ENCODE measurements at regions of chr18 and their contacts with region 1.

Region 1: DNA sequence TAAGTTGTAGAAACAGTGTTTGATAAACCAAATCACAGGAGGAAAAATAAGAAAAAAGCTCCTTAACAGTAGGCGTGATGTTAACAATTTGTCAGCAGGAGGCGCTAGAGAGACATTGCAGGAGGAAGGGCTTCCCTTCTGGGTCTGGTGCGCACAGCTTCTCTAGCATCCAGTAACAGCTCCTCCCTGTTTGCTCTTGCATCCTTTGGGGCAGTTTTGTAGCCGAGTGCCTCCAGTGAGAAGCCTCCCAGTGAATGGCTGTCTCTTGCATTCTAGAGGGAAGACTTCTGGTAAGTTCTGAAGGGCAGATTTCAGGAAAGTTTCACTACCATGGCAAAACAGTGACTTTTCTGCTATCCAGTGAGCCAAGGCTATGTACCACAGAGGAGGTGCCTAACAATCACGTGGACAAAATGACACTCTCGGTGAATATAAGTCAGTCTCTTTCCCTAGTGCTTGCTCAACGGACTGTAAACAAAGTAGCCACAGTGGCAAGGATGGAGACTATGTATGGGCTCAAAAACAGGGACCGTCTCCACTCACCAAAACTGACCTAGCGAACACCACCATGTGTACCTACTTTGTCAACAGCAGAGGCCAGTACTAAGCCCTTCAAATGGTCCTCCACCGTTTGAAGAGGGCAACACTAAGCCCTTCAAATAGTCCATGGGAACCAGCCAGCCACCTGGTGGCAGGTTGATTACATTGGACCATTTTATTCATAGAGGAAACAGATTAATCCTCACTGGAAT is 9.6 kb upstream of the ZNF396 start:
- DNase-seq: peak; percentile 72
- H3K4me3 Mint-ChIP-seq: peak overlapping the region; percentile 7
- H3K27ac Mint-ChIP-seq: no peak overlapping the region
- H3K4me1 Mint-ChIP-seq: no peaks in the 10 kb centered on the region
- H3K27me3 Mint-ChIP-seq: peaks cover 9% of the 10 kb centered on the region
- CTCF ChIP-seq: peak; percentile 85

Region 2: GRCh38 chr18:35227254-35227653 is 159.5 kb before region 1 on chr18:
- CTCF ChIA-PET with region 1: no interaction called
- intact Hi-C with region 1: no loop called
- DNase-seq: no peak
- H3K4me3 Mint-ChIP-seq: no peak overlapping the region
- H3K27ac Mint-ChIP-seq: no peak overlapping the region
- H3K4me1 Mint-ChIP-seq: no peaks in the 10 kb centered on the region
- H3K27me3 Mint-ChIP-seq: no peaks in the 10 kb centered on the region
- CTCF ChIP-seq: no peak

Region 3: GRCh38 chr18:35559867-35560266 is 173.1 kb after region 1 on chr18:
- CTCF ChIA-PET with region 1: no interaction called
- intact Hi-C with region 1: loop called (anchors 5 kb)
- DNase-seq: no peak
- H3K4me3 Mint-ChIP-seq: no peak overlapping the region
- H3K27ac Mint-ChIP-seq: no peak overlapping the region
- H3K4me1 Mint-ChIP-seq: no peaks in the 10 kb centered on the region
- H3K27me3 Mint-ChIP-seq: no peaks in the 10 kb centered on the region
- CTCF ChIP-seq: no peak

Region 4: GRCh38 chr18:35672897-35673296 is 286.1 kb after region 1 on chr18:
- CTCF ChIA-PET with region 1: no interaction called
- intact Hi-C with region 1: no loop called
- DNase-seq: peak; percentile 10
- H3K4me3 Mint-ChIP-seq: no peak overlapping the region
- H3K27ac Mint-ChIP-seq: no peak overlapping the region
- H3K4me1 Mint-ChIP-seq: peaks cover 19% of the 10 kb centered on the region
- H3K27me3 Mint-ChIP-seq: no peaks in the 10 kb centered on the region
- CTCF ChIP-seq: no peak

Region 5: DNA sequence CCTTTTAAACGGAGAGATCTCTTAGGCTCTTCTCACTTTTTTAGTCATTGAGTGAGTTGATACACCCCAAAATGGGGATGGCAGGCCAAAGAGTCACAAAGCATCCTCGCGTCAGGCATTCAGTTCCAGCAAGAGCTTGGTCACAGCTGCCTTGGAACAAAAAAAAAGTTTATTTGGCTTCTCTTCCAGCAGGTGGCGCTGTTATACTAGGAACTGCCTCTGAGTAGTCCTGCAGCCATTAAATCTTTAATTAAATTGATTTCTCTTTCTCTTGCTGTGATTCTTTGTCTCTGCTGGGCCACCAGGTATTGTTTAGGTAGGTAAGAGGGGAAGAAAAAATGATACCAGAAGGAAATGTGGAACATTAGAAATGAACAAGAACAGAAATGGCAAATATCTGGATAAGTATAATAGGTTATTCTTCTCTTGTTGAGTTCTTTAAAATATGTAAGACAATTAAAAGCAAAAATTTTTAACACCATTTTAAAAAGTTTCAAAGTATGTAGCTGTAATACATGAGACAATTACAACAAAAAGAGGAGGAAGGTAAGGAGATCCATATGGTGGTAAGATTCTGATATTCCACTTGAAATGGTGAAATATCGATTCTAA is 369.8 kb after region 1 on chr18:
- CTCF ChIA-PET with region 1: interaction called, 6 read pairs
- intact Hi-C with region 1: loop called (anchors 10 kb)
- DNase-seq: peak; percentile 68
- H3K4me3 Mint-ChIP-seq: no peak overlapping the region
- H3K27ac Mint-ChIP-seq: no peak overlapping the region
- H3K4me1 Mint-ChIP-seq: no peaks in the 10 kb centered on the region
- H3K27me3 Mint-ChIP-seq: peaks cover 43% of the 10 kb centered on the region
- CTCF ChIP-seq: peak; percentile 78

Measured in Calu3 (cell line).